T-cell (primary cell): ENCODE measurements at regions of chr2 and their contacts with region 1.

Region 1: DNA sequence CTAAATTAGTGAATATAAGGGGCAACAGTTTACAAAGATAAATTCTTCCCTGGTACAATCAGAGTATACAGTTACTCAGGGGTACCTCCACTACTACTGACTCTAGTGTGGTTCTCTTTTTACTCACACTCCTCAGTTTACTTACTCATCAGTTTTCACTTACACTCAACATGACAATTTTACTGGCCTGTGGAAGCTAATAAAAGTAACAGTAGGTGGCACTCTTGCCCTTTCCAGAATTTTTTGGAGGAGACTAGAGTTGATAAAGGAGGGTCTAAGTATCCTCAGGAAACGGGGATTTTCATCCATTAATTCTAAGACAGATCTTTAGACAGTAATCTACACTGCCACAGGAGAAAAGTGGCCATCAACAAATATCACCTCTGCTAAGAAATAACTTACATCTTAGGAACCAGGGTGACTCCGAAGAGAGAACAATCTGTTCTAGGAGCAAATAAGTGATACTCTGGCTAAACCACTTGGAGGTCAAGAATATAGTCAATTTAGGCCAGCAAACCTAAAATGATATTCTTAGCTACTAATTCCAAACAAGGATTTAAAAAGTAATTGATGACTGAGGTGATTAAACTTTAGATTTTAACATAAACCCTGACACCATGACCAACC is 61.3 kb downstream of the ATL2 start:
- DNase-seq: peak in 7 of 35 experiments; percentile 1 to 63 (median 18)
- ATAC-seq: peak in 2 of 4 experiments; percentile 26 to 65
- H3K4me3 ChIP-seq: no peak overlapping the region
- H3K4me3 Mint-ChIP-seq: no peak overlapping the region
- H3K27ac ChIP-seq: no peak overlapping the region
- H3K27ac Mint-ChIP-seq: no peak overlapping the region
- H3K4me1 ChIP-seq: peaks cover 0 to 2% of the 10 kb centered on the region in 2 experiments
- H3K4me1 Mint-ChIP-seq: no peaks in the 10 kb centered on the region
- H3K27me3 ChIP-seq: no peaks in the 10 kb centered on the region
- H3K27me3 Mint-ChIP-seq: no peaks in the 10 kb centered on the region

Region 2: DNA sequence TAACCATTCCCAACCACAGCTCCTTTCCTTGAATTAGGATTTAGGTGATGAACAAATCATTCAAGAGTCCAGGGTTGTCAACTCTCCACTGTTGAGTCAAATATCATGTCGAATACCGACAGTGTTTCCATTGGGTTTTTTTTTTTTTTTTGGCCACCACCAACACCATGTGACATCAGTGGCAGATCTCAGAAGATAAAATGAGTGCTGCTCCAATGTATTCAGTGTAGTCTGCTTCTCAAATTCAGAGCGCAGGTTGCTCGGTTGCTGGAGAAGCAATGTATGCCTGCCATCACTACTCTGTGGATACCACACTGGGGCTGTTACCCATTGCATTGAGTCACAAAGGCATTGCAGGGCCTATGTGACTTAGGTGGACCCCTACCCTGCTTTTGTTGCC is 72.1 kb after region 1 on chr2:
- CTCF ChIA-PET with region 1: no interaction called
- POLR2A ChIA-PET with region 1: no interaction called
- DNase-seq: peak in 1 of 35 experiments; percentile 34
- ATAC-seq: peak; percentile 36 to 62 (median 54)
- H3K4me3 ChIP-seq: no peak overlapping the region
- H3K4me3 Mint-ChIP-seq: peak overlapping the region in 2 of 3 donors; percentile 9 to 56
- H3K27ac ChIP-seq: no peak overlapping the region
- H3K27ac Mint-ChIP-seq: peak overlapping the region; percentile 16 to 61
- H3K4me1 ChIP-seq: peaks cover 9 to 16% of the 10 kb centered on the region in 2 experiments
- H3K4me1 Mint-ChIP-seq: peaks cover 17 to 30% (median 23%) of the 10 kb centered on the region in 3 donors
- H3K27me3 ChIP-seq: peaks cover 0 to 6% of the 10 kb centered on the region in 2 experiments
- H3K27me3 Mint-ChIP-seq: peaks cover 0 to 6% of the 10 kb centered on the region in 2 donors

Region 3: GRCh38 chr2:38465789-38466127 is 149.9 kb after region 1 on chr2:
- CTCF ChIA-PET with region 1: interaction called, 6 to 13 read pairs
- POLR2A ChIA-PET with region 1: no interaction called
- DNase-seq: peak in 14 of 35 experiments; percentile 0 to 42 (median 4)
- ATAC-seq: peak in 2 of 4 experiments; percentile 32 to 40
- H3K4me3 ChIP-seq: no peak overlapping the region
- H3K4me3 Mint-ChIP-seq: no peak overlapping the region
- H3K27ac ChIP-seq: no peak overlapping the region
- H3K27ac Mint-ChIP-seq: no peak overlapping the region
- H3K4me1 ChIP-seq: no peaks in the 10 kb centered on the region
- H3K4me1 Mint-ChIP-seq: peaks cover 0 to 2% (median 0%) of the 10 kb centered on the region in 3 donors
- H3K27me3 ChIP-seq: no peaks in the 10 kb centered on the region
- H3K27me3 Mint-ChIP-seq: no peaks in the 10 kb centered on the region

Region 4: GRCh38 chr2:38508311-38509039 is 192.7 kb after region 1 on chr2:
- CTCF ChIA-PET with region 1: interaction called, 47 to 113 read pairs
- POLR2A ChIA-PET with region 1: interaction called, 3 to 4 read pairs
- DNase-seq: peak; percentile 40 to 85 (median 72)
- ATAC-seq: peak; percentile 55 to 81 (median 68)
- H3K4me3 ChIP-seq: no peak overlapping the region
- H3K4me3 Mint-ChIP-seq: no peak overlapping the region
- H3K27ac ChIP-seq: no peak overlapping the region
- H3K27ac Mint-ChIP-seq: no peak overlapping the region
- H3K4me1 ChIP-seq: peaks cover 0 to 6% of the 10 kb centered on the region in 2 experiments
- H3K4me1 Mint-ChIP-seq: peaks cover 4 to 5% (median 5%) of the 10 kb centered on the region in 3 donors
- H3K27me3 ChIP-seq: peaks cover 0 to 17% of the 10 kb centered on the region in 2 experiments
- H3K27me3 Mint-ChIP-seq: peaks cover 0 to 8% of the 10 kb centered on the region in 2 donors

Region 5: DNA sequence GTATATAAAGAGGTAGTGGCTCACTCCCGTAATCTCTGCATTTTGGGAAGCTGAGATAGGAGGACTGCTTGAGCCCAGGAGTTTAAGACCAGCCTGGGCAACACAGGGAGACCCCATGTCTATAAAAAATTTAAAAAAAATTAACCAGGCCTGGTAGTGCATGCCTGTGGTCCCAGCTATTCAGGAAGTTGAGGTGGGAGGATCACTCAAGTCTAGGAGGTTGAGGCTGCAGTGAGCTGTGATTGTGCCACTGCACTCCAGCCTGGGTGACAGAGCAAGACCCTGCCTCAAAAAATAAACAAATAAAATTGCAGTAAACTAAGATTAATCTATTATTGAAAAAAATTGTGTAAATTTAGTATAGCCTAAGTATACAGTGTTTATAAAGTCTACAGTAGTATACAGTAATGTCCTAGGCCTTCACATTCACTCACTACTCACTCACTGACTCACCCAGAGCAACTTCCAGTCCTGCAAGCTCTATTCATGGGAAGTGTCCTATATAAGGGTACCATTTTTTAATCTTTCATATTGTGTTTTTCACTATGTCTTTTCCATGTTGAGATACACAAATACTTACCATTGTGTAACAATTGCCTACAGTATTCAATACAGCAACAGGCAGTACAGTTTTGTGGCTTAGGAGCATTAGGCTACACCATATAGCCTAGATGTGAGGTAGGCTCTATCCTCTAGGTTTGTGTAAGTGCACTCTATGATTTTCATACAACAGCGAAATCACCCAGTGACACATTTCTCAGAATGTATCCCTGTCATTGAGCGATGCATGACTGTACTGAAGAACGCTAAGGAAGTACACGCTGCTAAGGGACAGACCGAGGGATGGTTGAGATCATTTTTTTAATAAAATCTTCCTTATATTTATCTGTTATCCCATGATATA is 1131.7 kb after region 1 on chr2:
- CTCF ChIA-PET with region 1: no interaction called
- POLR2A ChIA-PET with region 1: interaction called in 1 of 2 experiments, 11 read pairs
- DNase-seq: no peak
- ATAC-seq: no peak
- H3K4me3 ChIP-seq: no peak overlapping the region
- H3K4me3 Mint-ChIP-seq: no peak overlapping the region
- H3K27ac ChIP-seq: no peak overlapping the region
- H3K27ac Mint-ChIP-seq: no peak overlapping the region
- H3K4me1 ChIP-seq: no peaks in the 10 kb centered on the region
- H3K4me1 Mint-ChIP-seq: no peaks in the 10 kb centered on the region
- H3K27me3 ChIP-seq: no peaks in the 10 kb centered on the region
- H3K27me3 Mint-ChIP-seq: no peaks in the 10 kb centered on the region